AG04450 (cell line): ENCODE measurements at regions of chr19 and their contacts with region 1.

Region 1: DNA sequence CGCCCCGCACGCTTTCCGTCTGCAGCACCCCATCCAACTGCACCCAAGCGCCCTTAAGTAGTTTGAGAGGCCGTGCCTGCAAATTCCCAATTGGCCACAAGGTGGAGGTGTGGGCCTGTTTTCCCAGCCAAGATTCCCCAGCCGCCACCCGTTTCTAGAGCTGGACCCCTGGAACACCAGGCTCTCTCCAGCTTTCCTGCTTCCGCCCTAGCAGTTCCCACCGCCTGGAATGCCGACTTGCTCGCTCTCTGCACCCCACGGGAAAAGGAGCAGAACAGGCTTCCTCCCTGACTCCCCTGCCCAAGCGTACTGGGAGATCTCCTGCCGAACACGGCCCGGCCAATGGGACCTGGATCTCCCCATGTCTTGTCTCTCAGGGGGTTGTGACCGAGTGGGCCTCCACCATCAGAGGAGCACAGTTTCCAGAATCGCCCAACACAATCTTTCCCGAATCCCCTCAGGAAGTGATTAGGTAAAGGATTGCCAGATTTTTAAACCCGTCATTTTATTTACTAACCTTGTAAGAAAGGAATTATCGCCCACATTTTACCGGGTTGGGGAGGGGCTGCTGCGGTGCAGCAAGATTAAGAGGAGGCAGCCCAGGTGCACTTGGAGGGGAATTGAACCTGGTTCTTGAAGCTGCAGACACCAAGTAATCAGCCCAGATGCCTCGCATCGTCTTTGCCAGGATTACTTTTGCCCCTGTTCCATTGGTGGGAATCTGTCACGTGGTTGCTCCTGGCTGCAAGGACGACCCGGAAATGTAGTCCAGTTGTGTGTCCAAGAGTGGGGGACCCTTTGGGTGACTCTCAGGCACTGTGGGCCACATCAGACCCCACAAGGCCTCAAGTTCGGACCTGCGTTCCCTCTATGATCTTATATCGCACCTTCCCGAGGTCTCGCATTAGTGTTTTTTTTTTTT is 3.5 kb upstream of the NAPSA start:
- DNase-seq: peak; percentile 65
- H3K4me3 ChIP-seq: peak overlapping the region; percentile 79
- H3K27ac ChIP-seq: peak overlapping the region; percentile 39
- H3K27me3 ChIP-seq: no peaks in the 10 kb centered on the region
- CTCF ChIP-seq: peak; percentile 81

Region 2: GRCh38 chr19:50333035-50333736 is 35.7 kb before region 1 on chr19:
- CTCF ChIA-PET with region 1: interaction called, 10 read pairs
- POLR2A ChIA-PET with region 1: no interaction called
- DNase-seq: peak; percentile 39
- H3K4me3 ChIP-seq: peak overlapping the region; percentile 61
- H3K27ac ChIP-seq: no peak overlapping the region
- H3K27me3 ChIP-seq: peaks cover 35% of the 10 kb centered on the region
- CTCF ChIP-seq: peak; percentile 22; the same call in 1 of the 2 replicates

Region 3: GRCh38 chr19:50414864-50415660 is 46.2 kb after region 1 on chr19:
- CTCF ChIA-PET with region 1: interaction called, 10 read pairs
- POLR2A ChIA-PET with region 1: no interaction called
- DNase-seq: peak; percentile 7
- H3K4me3 ChIP-seq: no peak overlapping the region
- H3K27ac ChIP-seq: no peak overlapping the region
- H3K27me3 ChIP-seq: peaks cover 13% of the 10 kb centered on the region
- CTCF ChIP-seq: peak; percentile 80

Region 4: GRCh38 chr19:50461066-50461875 is 92.4 kb after region 1 on chr19:
- CTCF ChIA-PET with region 1: interaction called, 18 read pairs
- POLR2A ChIA-PET with region 1: no interaction called
- DNase-seq: peak; percentile 29
- H3K4me3 ChIP-seq: no peak overlapping the region
- H3K27ac ChIP-seq: no peak overlapping the region
- H3K27me3 ChIP-seq: peaks cover 11% of the 10 kb centered on the region
- CTCF ChIP-seq: peak; percentile 91